Activated CD4-positive, alpha-beta T cell treated with anti-CD3 and anti-CD28 coated beads, Interleukin-2, amount 10 ng/mL, durations not matched to agents 24 days and 14 days (primary cell): ENCODE measurements at regions of chr9 and their contacts with region 1.

Region 1: DNA sequence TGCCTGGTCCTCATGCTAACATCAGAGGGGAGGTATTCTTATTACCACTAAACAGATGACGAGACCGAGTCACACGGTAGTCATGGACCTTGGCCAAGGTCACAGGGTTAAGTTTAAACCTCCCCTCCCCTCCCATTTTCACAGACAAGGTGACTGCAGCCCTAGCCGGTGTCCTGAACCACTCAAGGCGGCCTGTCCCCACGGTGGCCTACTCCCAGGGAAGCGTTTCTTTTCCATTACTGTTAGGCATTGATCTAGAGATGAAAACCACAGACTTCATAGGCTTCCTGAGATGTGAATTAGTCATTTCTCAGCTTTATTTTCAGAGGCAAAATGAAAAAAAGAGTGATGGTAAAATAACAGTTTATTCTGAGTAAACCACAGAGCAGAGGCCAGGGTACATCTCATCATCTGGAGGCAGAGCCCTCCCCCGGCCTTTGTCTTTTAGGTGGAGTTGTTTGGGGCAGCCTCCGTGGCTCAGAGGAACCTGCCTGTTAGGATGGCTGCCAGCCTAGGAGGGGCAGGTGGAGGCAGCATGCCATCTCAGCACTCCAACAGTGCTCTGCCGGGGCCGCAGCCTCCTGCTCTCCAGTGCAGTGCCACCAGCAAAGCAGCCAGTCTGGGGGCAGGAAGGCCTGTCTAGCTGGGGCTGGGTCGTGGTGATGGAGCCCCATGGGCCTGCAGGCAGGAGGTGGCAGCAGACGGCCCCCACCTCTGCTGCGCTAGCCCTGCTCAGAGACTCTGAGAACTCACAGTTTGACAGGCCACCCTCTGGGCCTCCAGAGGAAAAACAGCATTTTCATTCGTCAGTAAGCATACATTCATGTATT is 71.2 kb downstream of the RAPGEF1 start:
- DNase-seq: peak; percentile 90
- H3K4me3 Mint-ChIP-seq: peak overlapping the region; percentile 78
- H3K27ac Mint-ChIP-seq: peak overlapping the region; percentile 100
- H3K4me1 Mint-ChIP-seq: peaks cover 79% of the 10 kb centered on the region
- H3K27me3 Mint-ChIP-seq: no peaks in the 10 kb centered on the region

Region 2: GRCh38 chr9:131635285-131635684 is 33.4 kb before region 1 on chr9:
- intact Hi-C with region 1: loop called (anchors 1 kb)
- DNase-seq: peak; percentile 93
- H3K4me3 Mint-ChIP-seq: peak overlapping the region; percentile 40
- H3K27ac Mint-ChIP-seq: peak overlapping the region; percentile 89
- H3K4me1 Mint-ChIP-seq: peaks cover 51% of the 10 kb centered on the region
- H3K27me3 Mint-ChIP-seq: no peaks in the 10 kb centered on the region

Region 3: DNA sequence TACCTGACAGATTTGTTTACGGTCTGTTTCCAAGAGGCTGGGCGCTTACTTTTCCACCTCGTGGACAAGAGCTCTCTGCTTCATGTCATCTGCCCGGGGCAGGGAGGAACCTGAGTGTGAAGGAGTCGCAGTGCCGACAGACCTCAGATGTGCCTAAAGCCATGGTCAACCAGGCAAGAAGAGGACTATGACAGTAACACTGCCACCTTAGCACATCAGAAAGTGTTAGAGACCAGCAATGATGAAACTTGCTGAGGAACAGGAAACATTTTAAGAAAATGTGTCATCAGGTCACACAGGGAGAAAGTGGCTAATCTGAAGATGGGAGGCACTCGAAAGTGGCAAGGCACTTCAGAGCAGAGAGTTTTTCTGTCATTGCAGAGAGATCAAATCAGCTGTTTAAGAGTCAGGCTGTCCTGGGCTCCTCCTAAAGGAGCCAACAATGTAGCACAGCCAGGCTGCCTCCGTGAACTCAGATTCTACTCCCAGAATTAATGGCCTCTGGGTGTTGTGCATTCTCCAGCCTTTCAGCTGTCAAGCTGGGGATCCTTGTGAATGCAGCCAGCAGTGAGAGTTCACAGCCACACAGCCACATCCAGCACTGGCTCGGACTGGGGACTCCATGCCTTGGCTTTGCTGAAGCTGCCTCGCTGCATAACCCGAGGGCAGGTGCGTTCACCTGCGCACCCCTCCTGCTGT is 23.4 kb before region 1 on chr9:
- intact Hi-C with region 1: loop called (anchors 1 kb)
- DNase-seq: no peak
- H3K4me3 Mint-ChIP-seq: peak overlapping the region; percentile 47
- H3K27ac Mint-ChIP-seq: peak overlapping the region; percentile 100
- H3K4me1 Mint-ChIP-seq: peaks cover 51% of the 10 kb centered on the region
- H3K27me3 Mint-ChIP-seq: no peaks in the 10 kb centered on the region

Region 4: DNA sequence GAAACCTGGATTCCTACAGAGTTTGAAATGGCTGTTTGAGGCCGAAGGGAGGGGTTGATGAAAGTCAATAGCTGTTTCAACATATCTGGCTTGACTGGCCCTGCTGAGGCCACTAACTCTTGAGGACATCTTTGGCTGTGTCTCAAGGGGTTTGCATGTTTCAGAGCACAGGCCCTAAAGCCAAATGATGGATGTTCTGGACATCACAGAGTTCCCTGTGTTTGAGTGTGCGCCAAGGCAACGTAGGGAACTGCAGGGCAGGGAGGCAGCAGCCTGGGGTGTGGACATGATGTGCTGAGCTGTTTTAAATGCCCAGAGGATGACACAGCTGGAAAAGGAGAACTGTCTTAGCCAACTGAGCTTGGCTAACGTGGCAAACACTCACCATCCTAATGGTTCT is 18.4 kb before region 1 on chr9:
- intact Hi-C with region 1: loop called (anchors 1 kb)
- DNase-seq: no peak
- H3K4me3 Mint-ChIP-seq: no peak overlapping the region
- H3K27ac Mint-ChIP-seq: no peak overlapping the region
- H3K4me1 Mint-ChIP-seq: peaks cover 50% of the 10 kb centered on the region
- H3K27me3 Mint-ChIP-seq: no peaks in the 10 kb centered on the region

Region 5: GRCh38 chr9:131657890-131658752 is 10.5 kb before region 1 on chr9:
- intact Hi-C with region 1: loop called (anchors 1 kb)
- DNase-seq: peak; percentile 74
- H3K4me3 Mint-ChIP-seq: peak overlapping the region; percentile 76
- H3K27ac Mint-ChIP-seq: peak overlapping the region; percentile 99
- H3K4me1 Mint-ChIP-seq: peaks cover 74% of the 10 kb centered on the region
- H3K27me3 Mint-ChIP-seq: no peaks in the 10 kb centered on the region

Region 6: DNA sequence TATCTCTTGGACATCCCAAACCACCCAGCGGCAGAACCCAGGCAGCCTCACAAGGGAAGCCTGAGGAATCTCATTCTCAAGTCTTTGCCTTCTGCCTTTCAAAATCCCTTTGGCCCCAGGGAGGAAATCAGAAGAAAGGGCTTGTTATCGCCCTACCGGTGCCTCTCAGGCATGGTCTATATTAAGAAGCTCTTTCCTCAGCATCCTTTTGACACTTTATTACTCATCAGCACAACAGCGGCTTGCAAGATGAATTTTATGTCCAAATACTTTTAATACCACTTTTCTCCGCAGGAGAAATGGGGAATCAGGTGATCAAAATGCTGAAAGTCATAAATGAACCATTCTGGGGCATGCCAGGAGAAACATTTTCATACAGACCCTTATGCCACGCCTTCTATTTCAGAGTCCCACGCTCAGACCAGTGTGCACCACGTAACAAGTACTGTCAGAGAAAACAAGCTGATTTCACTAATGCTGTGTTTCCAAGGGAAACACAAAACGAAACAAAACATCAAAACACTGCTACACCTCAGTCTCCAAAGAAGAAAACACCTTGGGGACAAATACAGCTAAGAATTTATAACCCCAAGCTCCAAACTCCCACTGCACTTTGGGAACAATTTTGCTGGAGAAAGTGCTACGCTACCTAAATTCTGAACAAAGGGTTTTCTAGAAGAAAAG is 41.3 kb after region 1 on chr9:
- intact Hi-C with region 1: loop called (anchors 1 kb)
- DNase-seq: peak; percentile 85
- H3K4me3 Mint-ChIP-seq: peak overlapping the region; percentile 72
- H3K27ac Mint-ChIP-seq: peak overlapping the region; percentile 98
- H3K4me1 Mint-ChIP-seq: peaks cover 68% of the 10 kb centered on the region
- H3K27me3 Mint-ChIP-seq: no peaks in the 10 kb centered on the region

Region 7: GRCh38 chr9:131733541-131734061 is 64.9 kb after region 1 on chr9:
- intact Hi-C with region 1: loop called (anchors 1 kb)
- DNase-seq: peak; percentile 80
- H3K4me3 Mint-ChIP-seq: peak overlapping the region; percentile 79
- H3K27ac Mint-ChIP-seq: peak overlapping the region; percentile 93
- H3K4me1 Mint-ChIP-seq: peaks cover 78% of the 10 kb centered on the region
- H3K27me3 Mint-ChIP-seq: no peaks in the 10 kb centered on the region